H1 (cell line): ENCODE measurements at regions of chr3 and their contacts with region 1.

Region 1: DNA sequence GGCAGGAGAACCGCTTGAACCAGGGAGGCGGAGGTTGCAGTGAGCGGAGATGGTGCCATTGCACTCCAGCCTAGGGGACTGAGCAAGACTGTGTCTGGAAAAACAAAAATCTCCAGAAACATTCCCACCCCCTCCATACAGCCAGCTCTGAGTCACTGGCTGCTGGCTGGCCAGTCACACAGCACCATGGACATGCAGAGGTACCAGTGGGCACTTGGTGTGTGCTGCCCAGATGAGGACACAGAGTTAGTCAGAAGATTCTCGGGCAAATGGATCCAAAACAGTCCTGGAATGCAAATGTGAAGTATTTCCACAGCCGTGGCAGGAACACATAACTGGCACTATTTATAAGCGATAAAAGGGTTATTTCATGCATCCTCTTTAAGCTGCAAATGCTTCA is 44.6 kb downstream of the BDH1 start:
- DNase-seq: no peak
- H3K4me3 ChIP-seq: no peak overlapping the region
- H3K27ac ChIP-seq: no peak overlapping the region
- H3K4me1 ChIP-seq: peaks cover 0 to 18% (median 5%) of the 10 kb centered on the region in 4 experiments; a peak in 5 of 7 replicates
- H3K27me3 ChIP-seq: peaks cover 0 to 6% (median 2%) of the 10 kb centered on the region in 4 experiments; a peak in 2 of 7 replicates
- CTCF ChIP-seq: no peak
- EP300 ChIP-seq: no peak
- POLR2A ChIP-seq: no peak
- RAD21 ChIP-seq: no peak

Region 2: DNA sequence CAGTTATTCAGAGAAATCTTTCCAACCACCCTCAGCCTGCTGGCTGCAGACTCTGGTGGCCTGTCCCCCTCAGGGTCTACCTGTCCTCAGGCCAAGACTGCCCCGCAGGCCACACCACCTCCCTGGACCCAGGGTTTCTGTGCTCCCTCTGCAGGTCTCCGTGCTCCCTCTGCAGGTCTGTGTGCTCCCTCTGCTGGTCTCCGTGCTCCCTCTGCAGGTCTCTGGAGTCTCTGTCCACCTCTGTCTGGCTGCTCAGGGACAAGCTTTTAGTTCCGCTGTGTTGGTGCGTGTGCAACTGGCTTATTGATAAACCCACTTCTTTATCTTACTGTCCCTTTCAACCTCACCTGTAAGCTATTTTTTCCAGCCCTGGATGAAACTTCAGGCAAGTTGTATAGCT is 14.6 kb after region 1 on chr3:
- CTCF ChIA-PET with region 1: interaction called, 35 read pairs
- POLR2A ChIA-PET with region 1: interaction called, 7 read pairs
- DNase-seq: no peak
- H3K4me3 ChIP-seq: no peak overlapping the region
- H3K27ac ChIP-seq: no peak overlapping the region
- H3K4me1 ChIP-seq: peaks cover 0 to 10% (median 9%) of the 10 kb centered on the region in 4 experiments; a peak in 6 of 7 replicates
- H3K27me3 ChIP-seq: no peaks in the 10 kb centered on the region
- CTCF ChIP-seq: peak in 2 of 3 experiments; percentile 48 to 76; a peak in 3 of 4 replicates
- EP300 ChIP-seq: no peak
- POLR2A ChIP-seq: no peak
- RAD21 ChIP-seq: peak; percentile 35 to 42; a peak in 3 of 4 replicates

Region 3: GRCh38 chr3:197541756-197542539 is 30.8 kb after region 1 on chr3:
- CTCF ChIA-PET with region 1: interaction called, 14 read pairs
- POLR2A ChIA-PET with region 1: no interaction called
- DNase-seq: peak in 1 of 2 experiments; percentile 89
- H3K4me3 ChIP-seq: peak overlapping the region in 2 of 4 experiments; percentile 17 to 34; a peak in 3 of 8 replicates
- H3K27ac ChIP-seq: no peak overlapping the region
- H3K4me1 ChIP-seq: peaks cover 12 to 26% (median 17%) of the 10 kb centered on the region in 4 experiments
- H3K27me3 ChIP-seq: no peaks in the 10 kb centered on the region; a peak in 2 of 7 replicates
- CTCF ChIP-seq: no peak
- EP300 ChIP-seq: no peak
- POLR2A ChIP-seq: no peak
- RAD21 ChIP-seq: no peak

Region 4: DNA sequence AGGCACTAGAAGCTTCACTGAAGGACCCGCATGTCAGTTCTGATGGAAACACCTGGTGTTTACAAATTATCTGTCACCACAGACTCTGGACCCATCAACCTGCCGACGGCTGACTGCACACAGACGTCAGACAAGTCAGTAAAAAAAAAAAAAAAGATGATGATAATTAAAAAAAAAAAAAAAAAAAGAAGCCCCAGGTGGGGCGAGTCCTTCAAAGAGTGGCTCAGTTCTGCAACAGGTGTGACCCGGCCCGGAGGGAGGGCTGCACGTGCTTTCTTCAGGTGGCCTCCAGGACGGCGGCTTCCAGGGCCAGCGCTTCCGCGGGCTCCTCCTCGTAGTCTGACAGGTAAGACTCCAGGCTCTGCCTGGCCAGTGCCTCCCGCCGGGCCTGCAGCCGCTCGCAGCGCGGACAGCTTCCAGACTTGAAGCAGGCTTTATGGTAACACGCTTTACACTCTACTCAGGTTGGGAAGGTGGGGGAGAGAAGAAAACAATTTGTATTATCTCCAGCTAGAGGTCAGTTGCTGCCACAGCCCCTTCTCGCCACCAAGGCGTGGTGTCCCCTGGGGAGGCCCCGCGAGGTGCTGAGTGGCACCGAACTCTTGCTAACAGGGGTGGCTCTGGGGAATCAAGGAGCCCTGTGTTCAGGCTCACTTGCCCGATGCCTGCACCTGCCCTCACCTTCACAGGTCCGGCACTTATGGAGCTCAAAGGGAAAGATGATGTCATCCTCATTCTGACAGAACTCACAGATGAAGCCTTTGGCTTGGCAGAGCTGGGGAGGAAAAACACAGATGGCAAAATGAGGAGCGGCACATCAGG is 163.8 kb after region 1 on chr3:
- CTCF ChIA-PET with region 1: no interaction called
- POLR2A ChIA-PET with region 1: no interaction called
- DNase-seq: no peak
- H3K4me3 ChIP-seq: no peak overlapping the region
- H3K27ac ChIP-seq: no peak overlapping the region
- H3K4me1 ChIP-seq: no peaks in the 10 kb centered on the region
- H3K27me3 ChIP-seq: no peaks in the 10 kb centered on the region
- CTCF ChIP-seq: no peak
- EP300 ChIP-seq: no peak
- POLR2A ChIP-seq: no peak
- RAD21 ChIP-seq: no peak